B cell (primary cell): ENCODE measurements at regions of chr2 and their contacts with region 1.

Region 1: GRCh38 chr2:209074711-209075110 is 349.1 kb upstream of the MAP2 start:
- DNase-seq: no peak
- ATAC-seq: no peak
- H3K4me3 ChIP-seq: no peak overlapping the region
- H3K4me3 Mint-ChIP-seq: no peak overlapping the region
- H3K27ac ChIP-seq: no peak overlapping the region
- H3K27ac Mint-ChIP-seq: no peak overlapping the region
- H3K4me1 ChIP-seq: no peaks in the 10 kb centered on the region
- H3K4me1 Mint-ChIP-seq: no peaks in the 10 kb centered on the region
- H3K27me3 ChIP-seq: no peaks in the 10 kb centered on the region
- H3K27me3 Mint-ChIP-seq: no peaks in the 10 kb centered on the region
- CTCF ChIP-seq: no peak

Region 2: GRCh38 chr2:208479342-208479741 is 595.4 kb before region 1 on chr2:
- CTCF ChIA-PET with region 1: no interaction called
- POLR2A ChIA-PET with region 1: no interaction called
- intact Hi-C with region 1: no loop called
- DNase-seq: no peak
- ATAC-seq: no peak
- H3K4me3 ChIP-seq: no peak overlapping the region
- H3K4me3 Mint-ChIP-seq: no peak overlapping the region
- H3K27ac ChIP-seq: no peak overlapping the region
- H3K27ac Mint-ChIP-seq: no peak overlapping the region
- H3K4me1 ChIP-seq: no peaks in the 10 kb centered on the region
- H3K4me1 Mint-ChIP-seq: peaks cover 3% of the 10 kb centered on the region
- H3K27me3 ChIP-seq: no peaks in the 10 kb centered on the region
- H3K27me3 Mint-ChIP-seq: peaks cover 3% of the 10 kb centered on the region
- CTCF ChIP-seq: no peak

Region 3: GRCh38 chr2:209086761-209087160 is 12.1 kb after region 1 on chr2:
- CTCF ChIA-PET with region 1: no interaction called
- POLR2A ChIA-PET with region 1: no interaction called
- intact Hi-C with region 1: loop called (anchors 1 kb)
- DNase-seq: no peak
- ATAC-seq: no peak
- H3K4me3 ChIP-seq: no peak overlapping the region
- H3K4me3 Mint-ChIP-seq: no peak overlapping the region
- H3K27ac ChIP-seq: no peak overlapping the region
- H3K27ac Mint-ChIP-seq: no peak overlapping the region
- H3K4me1 ChIP-seq: no peaks in the 10 kb centered on the region
- H3K4me1 Mint-ChIP-seq: no peaks in the 10 kb centered on the region
- H3K27me3 ChIP-seq: no peaks in the 10 kb centered on the region
- H3K27me3 Mint-ChIP-seq: no peaks in the 10 kb centered on the region
- CTCF ChIP-seq: no peak